ENCODE measurements at regions of chr9 and their contacts with region 1.

Region 1: GRCh38 chr9:5352637-5353455 is 13.2 kb upstream of the RLN1 start:
- DNase-seq: no peak
- ATAC-seq: no peak
- H3K4me3 ChIP-seq: no peak overlapping the region
- H3K27ac ChIP-seq: peak overlapping the region in 1 of 10 donors; percentile 1
- H3K4me1 ChIP-seq: peaks cover 0 to 29% (median 6%) of the 10 kb centered on the region in 9 donors
- H3K27me3 ChIP-seq: no peaks in the 10 kb centered on the region
- CTCF ChIP-seq: no peak

Region 2: DNA sequence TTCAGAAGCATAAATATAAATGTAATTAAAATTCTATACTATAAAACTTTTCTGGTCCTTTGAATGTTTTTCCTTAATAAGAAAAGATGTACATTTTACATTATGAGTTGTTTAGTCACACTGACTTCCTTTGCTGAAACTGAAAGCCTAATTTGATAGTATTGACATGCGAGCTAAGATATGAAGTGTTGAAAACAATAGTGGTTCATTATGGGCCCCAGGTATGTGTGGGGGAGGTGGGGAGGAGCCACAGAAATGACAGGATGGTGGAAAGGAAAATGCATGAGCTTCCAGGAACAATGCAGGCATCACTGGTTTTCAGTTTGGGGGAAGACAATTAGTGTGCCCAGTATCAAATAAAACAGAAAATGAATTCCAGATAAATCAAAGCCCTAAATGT is 22.2 kb after region 1 on chr9:
- intact Hi-C with region 1: no loop called
- DNase-seq: no peak
- ATAC-seq: no peak
- H3K4me3 ChIP-seq: no peak overlapping the region
- H3K27ac ChIP-seq: no peak overlapping the region
- H3K4me1 ChIP-seq: peaks cover 0 to 17% (median 0%) of the 10 kb centered on the region in 9 donors
- H3K27me3 ChIP-seq: no peaks in the 10 kb centered on the region
- CTCF ChIP-seq: no peak

Region 3: DNA sequence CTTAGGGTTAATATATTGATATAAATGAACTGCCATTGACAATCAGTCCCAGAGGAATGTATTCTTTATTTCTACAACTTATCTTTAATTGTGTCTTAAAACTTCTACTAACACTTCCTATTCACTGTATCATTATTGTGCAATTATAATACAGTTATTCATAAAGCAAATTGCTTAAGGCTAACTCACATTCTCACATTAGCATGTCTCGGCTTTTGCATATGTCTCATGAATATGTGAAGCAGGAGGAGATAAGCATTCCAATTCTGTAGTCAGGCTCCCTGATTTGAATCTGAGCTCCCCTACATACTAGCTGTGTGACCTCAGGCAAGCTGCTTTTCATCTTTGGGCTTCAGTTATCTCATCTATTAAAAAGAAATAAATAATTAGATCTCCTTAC is 39.4 kb after region 1 on chr9:
- intact Hi-C with region 1: no loop called
- DNase-seq: no peak
- ATAC-seq: no peak
- H3K4me3 ChIP-seq: no peak overlapping the region
- H3K27ac ChIP-seq: no peak overlapping the region
- H3K4me1 ChIP-seq: peaks cover 0 to 10% (median 0%) of the 10 kb centered on the region in 9 donors
- H3K27me3 ChIP-seq: no peaks in the 10 kb centered on the region
- CTCF ChIP-seq: no peak

Region 4: DNA sequence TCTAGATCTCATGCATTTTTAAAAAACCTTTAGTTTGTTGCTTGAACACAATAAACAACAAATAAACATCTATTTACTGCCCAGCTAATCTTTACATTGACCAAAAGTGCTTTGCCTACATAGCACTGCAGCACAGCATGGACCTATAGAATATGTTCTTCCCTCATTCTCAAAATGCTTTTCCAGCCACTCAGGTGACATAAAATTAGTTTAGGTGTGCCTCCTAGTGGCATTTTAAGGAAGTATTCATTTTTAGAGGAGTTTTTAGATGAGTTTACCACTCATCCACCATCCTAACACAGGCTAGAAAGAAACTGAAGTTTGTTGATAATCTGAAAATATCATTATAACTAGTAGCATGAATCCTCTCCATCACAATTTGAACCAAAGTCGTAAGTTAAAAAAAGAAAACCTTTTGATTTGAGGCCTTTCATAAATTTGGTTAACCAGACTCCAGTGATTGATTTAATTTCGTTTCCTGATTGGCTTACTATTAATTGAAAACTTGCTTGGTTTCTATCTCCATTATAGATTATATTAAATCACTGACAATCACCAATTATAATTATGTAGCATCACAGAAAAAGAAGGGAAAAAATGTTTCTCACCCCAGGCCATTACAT is 72.3 kb after region 1 on chr9:
- intact Hi-C with region 1: loop called in 2 of 10 experiments (anchors 10 kb)
- DNase-seq: no peak
- ATAC-seq: no peak
- H3K4me3 ChIP-seq: no peak overlapping the region
- H3K27ac ChIP-seq: no peak overlapping the region
- H3K4me1 ChIP-seq: no peaks in the 10 kb centered on the region
- H3K27me3 ChIP-seq: no peaks in the 10 kb centered on the region
- CTCF ChIP-seq: peak in 7 of 9 donors; percentile 30 to 57 (median 46)

Region 5: GRCh38 chr9:5437254-5438216 is 84.7 kb after region 1 on chr9 and contains the start of gene PLGRKT:
- intact Hi-C with region 1: loop called in 1 of 10 experiments (anchors 10 kb)
- DNase-seq: peak; percentile 95
- ATAC-seq: peak; percentile 99
- H3K4me3 ChIP-seq: peak within 1 kb of the TSS; percentile 39 to 87 (median 67)
- H3K27ac ChIP-seq: peak within 1 kb of the TSS; percentile 41 to 97 (median 92)
- H3K4me1 ChIP-seq: peaks cover 0 to 26% (median 22%) of the 10 kb centered on the region in 9 donors
- H3K27me3 ChIP-seq: no peaks in the 10 kb centered on the region
- CTCF ChIP-seq: peak in 6 of 9 donors; percentile 10 to 53 (median 33)
- total RNA-seq, gene PLGRKT: 30.1 to 53.0 (median 36.3) TPM

Region 6: GRCh38 chr9:5510360-5510931 is 157.6 kb after region 1 on chr9 and contains the start of gene PDCD1LG2:
- intact Hi-C with region 1: no loop called
- DNase-seq: no peak
- ATAC-seq: peak in 7 of 8 donors; percentile 28 to 75 (median 59)
- H3K4me3 ChIP-seq: peak within 1 kb of the TSS in 9 of 10 donors; percentile 0 to 51 (median 47)
- H3K27ac ChIP-seq: peak within 1 kb of the TSS; percentile 24 to 85 (median 74)
- H3K4me1 ChIP-seq: peaks cover 0 to 68% (median 40%) of the 10 kb centered on the region in 9 donors
- H3K27me3 ChIP-seq: no peaks in the 10 kb centered on the region
- CTCF ChIP-seq: no peak
- total RNA-seq, gene PDCD1LG2: 0.72 to 8.6 (median 1.3) TPM

Measured in heart right ventricle (tissue), 16 donors.